Heart left ventricle (tissue), 16 donors: ENCODE measurements at regions of chr15 and their contacts with region 1.

Region 1: GRCh38 chr15:66774001-66774814 is 72.2 kb downstream of the SMAD6 start:
- DNase-seq: peak; percentile 85 to 91 (median 87)
- ATAC-seq: peak; percentile 89 to 95 (median 93)
- H3K4me3 ChIP-seq: no peak overlapping the region
- H3K27ac ChIP-seq: peak overlapping the region; percentile 16 to 79 (median 65)
- H3K4me1 ChIP-seq: peaks cover 0 to 83% (median 39%) of the 10 kb centered on the region in 12 donors
- H3K27me3 ChIP-seq: no peaks in the 10 kb centered on the region
- CTCF ChIP-seq: peak; percentile 89 to 99 (median 96)
- POLR2A ChIP-seq: no peak

Region 2: DNA sequence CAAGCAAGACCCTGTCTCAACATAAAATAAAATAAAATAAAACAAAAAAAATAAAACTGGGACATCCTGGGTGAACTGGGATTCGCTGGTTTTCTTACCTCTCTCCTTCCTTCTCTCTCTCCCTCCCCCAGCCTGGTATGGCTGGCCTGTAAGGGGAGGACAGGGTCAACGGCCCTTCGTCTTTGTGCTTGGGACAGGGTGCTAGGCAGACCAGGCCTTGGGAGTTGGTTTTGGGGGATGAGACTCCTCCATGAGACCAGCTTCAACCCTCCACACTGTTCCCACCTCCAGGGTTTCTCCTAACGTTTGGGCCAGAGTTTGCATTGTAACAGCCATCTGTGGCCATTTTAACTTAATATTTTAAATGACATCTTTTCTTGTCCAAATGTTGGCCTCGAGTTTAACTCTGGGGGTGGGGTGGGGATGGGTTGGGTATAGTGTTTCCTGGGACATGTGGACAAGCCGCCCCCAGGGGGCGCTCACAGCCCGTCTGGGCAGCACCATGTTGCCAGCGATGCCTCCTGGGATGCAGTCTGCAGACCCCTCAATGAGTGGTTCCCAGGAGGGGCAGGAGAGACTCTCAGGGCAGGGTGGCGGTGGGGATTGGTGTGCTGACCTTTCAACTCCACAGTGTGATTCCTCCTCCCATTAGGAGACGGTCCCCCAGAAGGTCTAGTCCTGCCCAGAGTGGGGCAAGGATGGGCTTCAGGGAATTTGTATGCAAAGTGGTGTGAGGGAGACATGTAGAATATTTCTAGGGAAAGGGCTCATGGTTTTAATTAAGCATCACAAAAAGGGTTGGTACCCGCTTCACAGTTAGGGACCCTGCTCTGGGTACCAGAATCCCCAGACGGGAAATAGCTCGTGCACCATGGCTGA is 170.7 kb before region 1 on chr15:
- intact Hi-C with region 1: loop called in 7 of 10 experiments (anchors 1 to 5 kb)
- DNase-seq: peak; percentile 58 to 83 (median 65)
- ATAC-seq: peak; percentile 52 to 90 (median 79)
- H3K4me3 ChIP-seq: no peak overlapping the region
- H3K27ac ChIP-seq: no peak overlapping the region
- H3K4me1 ChIP-seq: peaks cover 0 to 6% (median 0%) of the 10 kb centered on the region in 12 donors
- H3K27me3 ChIP-seq: no peaks in the 10 kb centered on the region
- CTCF ChIP-seq: peak; percentile 66 to 87 (median 82)
- POLR2A ChIP-seq: no peak

Region 3: DNA sequence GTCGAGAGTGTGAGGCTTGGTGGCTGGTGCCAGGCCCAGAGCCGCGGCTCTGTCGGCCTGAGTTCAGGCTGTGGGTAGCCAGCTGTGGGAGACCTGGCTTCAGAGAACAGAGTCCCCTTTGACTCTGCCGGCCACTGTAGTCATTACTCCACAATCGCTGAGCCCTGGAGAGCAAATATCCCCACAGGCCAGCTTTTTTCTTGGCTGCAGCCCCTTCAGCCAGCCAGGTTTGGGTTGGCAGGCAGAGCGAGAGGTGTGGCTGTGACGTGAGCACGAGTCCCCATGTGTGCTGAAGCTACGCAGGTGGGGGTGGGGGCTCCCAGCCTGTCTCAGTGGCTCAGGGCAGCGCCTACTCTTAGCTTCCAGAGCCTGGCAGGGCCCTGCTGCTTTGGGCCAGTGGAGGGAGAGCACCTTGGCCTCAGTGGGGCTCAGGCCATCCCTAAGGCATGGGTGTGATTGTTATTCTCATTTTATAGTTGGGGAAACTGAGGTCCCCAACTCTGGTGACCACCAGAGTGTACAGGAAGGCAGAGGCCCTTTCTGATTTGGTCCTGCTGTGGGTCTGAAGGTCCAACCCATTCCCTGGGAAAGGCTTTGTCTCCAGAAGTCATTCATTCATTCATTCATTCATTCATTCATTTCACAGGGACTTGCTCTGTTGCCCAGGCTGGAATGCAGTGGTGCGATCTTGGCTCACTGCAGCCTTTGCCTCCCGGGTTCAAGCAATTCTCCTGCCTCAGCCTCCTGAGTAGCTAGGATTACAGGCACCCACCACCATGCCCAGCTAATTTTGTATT is 162.8 kb before region 1 on chr15:
- intact Hi-C with region 1: loop called in 5 of 10 experiments (anchors 2 to 5 kb)
- DNase-seq: no peak
- ATAC-seq: peak in 1 of 4 donors; percentile 60
- H3K4me3 ChIP-seq: no peak overlapping the region
- H3K27ac ChIP-seq: no peak overlapping the region
- H3K4me1 ChIP-seq: peaks cover 0 to 32% (median 5%) of the 10 kb centered on the region in 12 donors
- H3K27me3 ChIP-seq: no peaks in the 10 kb centered on the region
- CTCF ChIP-seq: no peak
- POLR2A ChIP-seq: no peak

Region 4: GRCh38 chr15:66619151-66619903 is 154.9 kb before region 1 on chr15:
- intact Hi-C with region 1: loop called in 9 of 10 experiments (anchors 1 to 5 kb)
- DNase-seq: peak; percentile 73 to 85 (median 77)
- ATAC-seq: peak; percentile 53 to 75 (median 72)
- H3K4me3 ChIP-seq: no peak overlapping the region
- H3K27ac ChIP-seq: peak overlapping the region in 11 of 12 donors; percentile 1 to 87 (median 70)
- H3K4me1 ChIP-seq: peaks cover 0 to 66% (median 38%) of the 10 kb centered on the region in 12 donors
- H3K27me3 ChIP-seq: peaks cover 0 to 10% (median 0%) of the 10 kb centered on the region in 9 donors
- CTCF ChIP-seq: peak; percentile 81 to 96 (median 92)
- POLR2A ChIP-seq: no peak

Region 5: GRCh38 chr15:66707310-66708082 is 66.7 kb before region 1 on chr15:
- intact Hi-C with region 1: loop called (anchors 1 to 5 kb)
- DNase-seq: peak in 4 of 5 donors; percentile 39 to 66 (median 55)
- ATAC-seq: peak; percentile 9 to 59 (median 44)
- H3K4me3 ChIP-seq: peak overlapping the region in 10 of 12 donors; percentile 10 to 90 (median 68)
- H3K27ac ChIP-seq: peak overlapping the region in 11 of 12 donors; percentile 19 to 95 (median 81)
- H3K4me1 ChIP-seq: peaks cover 0 to 65% (median 37%) of the 10 kb centered on the region in 12 donors
- H3K27me3 ChIP-seq: peaks cover 0 to 25% (median 0%) of the 10 kb centered on the region in 9 donors
- CTCF ChIP-seq: peak in 5 of 12 donors; percentile 15 to 32 (median 25)
- POLR2A ChIP-seq: no peak

Region 6: DNA sequence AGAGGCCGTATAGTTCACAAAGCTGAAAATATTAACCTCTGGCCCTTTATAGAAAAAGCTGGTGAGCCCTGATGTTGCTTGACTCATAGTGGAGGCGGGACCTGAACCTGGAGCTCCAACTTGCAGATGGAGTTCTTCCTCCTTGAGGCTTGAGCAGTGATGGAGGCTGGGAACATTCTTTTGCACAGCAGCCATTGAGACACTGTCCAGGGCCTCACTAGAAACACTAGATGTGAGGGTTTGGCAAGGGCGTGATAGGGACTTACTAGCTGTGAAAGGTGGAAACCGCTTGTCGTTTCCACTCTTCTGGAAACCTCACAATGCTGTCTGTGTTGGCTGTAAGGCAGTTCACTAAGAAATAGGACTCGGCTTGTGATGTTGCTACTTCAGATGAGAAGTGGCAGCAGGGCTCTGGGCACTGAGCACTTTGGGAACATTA is 59.6 kb before region 1 on chr15:
- intact Hi-C with region 1: loop called in 4 of 10 experiments (anchors 5 kb)
- DNase-seq: peak in 1 of 5 donors; percentile 16
- ATAC-seq: no peak
- H3K4me3 ChIP-seq: no peak overlapping the region
- H3K27ac ChIP-seq: peak overlapping the region in 1 of 12 donors; percentile 40
- H3K4me1 ChIP-seq: peaks cover 0 to 65% (median 30%) of the 10 kb centered on the region in 12 donors
- H3K27me3 ChIP-seq: no peaks in the 10 kb centered on the region
- CTCF ChIP-seq: no peak
- POLR2A ChIP-seq: no peak

Region 7: GRCh38 chr15:66894986-66895780 is 121.0 kb after region 1 on chr15:
- intact Hi-C with region 1: no loop called
- DNase-seq: no peak
- ATAC-seq: no peak
- H3K4me3 ChIP-seq: no peak overlapping the region
- H3K27ac ChIP-seq: no peak overlapping the region
- H3K4me1 ChIP-seq: peaks cover 0 to 42% (median 7%) of the 10 kb centered on the region in 12 donors
- H3K27me3 ChIP-seq: no peaks in the 10 kb centered on the region
- CTCF ChIP-seq: no peak
- POLR2A ChIP-seq: no peak